Naive thymus-derived CD4-positive, alpha-beta T cell (primary cell): ENCODE measurements at regions of chr1 and their contacts with region 1.

Region 1: GRCh38 chr1:86380257-86380861 is 15.8 kb downstream of the ODF2L start:
- DNase-seq: peak in 7 of 9 donors; percentile 15 to 64 (median 46)
- ATAC-seq: peak; percentile 90
- H3K4me3 ChIP-seq: no peak overlapping the region
- H3K4me3 Mint-ChIP-seq: peak overlapping the region in 2 of 10 donors; percentile 15 to 45
- H3K27ac ChIP-seq: no peak overlapping the region
- H3K27ac Mint-ChIP-seq: peak overlapping the region in 1 of 9 donors; percentile 59
- H3K4me1 ChIP-seq: peaks cover 0 to 8% of the 10 kb centered on the region in 2 donors
- H3K4me1 Mint-ChIP-seq: peaks cover 1 to 21% (median 16%) of the 10 kb centered on the region in 7 donors
- H3K27me3 ChIP-seq: no peaks in the 10 kb centered on the region
- H3K27me3 Mint-ChIP-seq: no peaks in the 10 kb centered on the region

Region 2: GRCh38 chr1:86395771-86396497 is 15.6 kb after region 1 on chr1 and contains the start of gene ODF2L:
- CTCF ChIA-PET with region 1: interaction called, 4 read pairs
- POLR2A ChIA-PET with region 1: interaction called, 21 read pairs
- intact Hi-C with region 1: loop called (anchors 1 kb)
- DNase-seq: peak; percentile 73 to 92 (median 90)
- ATAC-seq: peak; percentile 100
- H3K4me3 ChIP-seq: peak within 1 kb of the TSS; percentile 80
- H3K4me3 Mint-ChIP-seq: peak within 1 kb of the TSS; percentile 90 to 100 (median 98)
- H3K27ac ChIP-seq: peak within 1 kb of the TSS; percentile 90
- H3K27ac Mint-ChIP-seq: peak within 1 kb of the TSS; percentile 94 to 99 (median 98)
- H3K4me1 ChIP-seq: peaks cover 17 to 20% of the 10 kb centered on the region in 2 donors
- H3K4me1 Mint-ChIP-seq: peaks cover 23 to 70% (median 58%) of the 10 kb centered on the region in 7 donors
- H3K27me3 ChIP-seq: no peaks in the 10 kb centered on the region
- H3K27me3 Mint-ChIP-seq: peaks cover 0 to 7% (median 0%) of the 10 kb centered on the region in 5 donors
- total RNA-seq, gene ODF2L: 50.3 to 75.3 (median 52.2) TPM

Region 3: DNA sequence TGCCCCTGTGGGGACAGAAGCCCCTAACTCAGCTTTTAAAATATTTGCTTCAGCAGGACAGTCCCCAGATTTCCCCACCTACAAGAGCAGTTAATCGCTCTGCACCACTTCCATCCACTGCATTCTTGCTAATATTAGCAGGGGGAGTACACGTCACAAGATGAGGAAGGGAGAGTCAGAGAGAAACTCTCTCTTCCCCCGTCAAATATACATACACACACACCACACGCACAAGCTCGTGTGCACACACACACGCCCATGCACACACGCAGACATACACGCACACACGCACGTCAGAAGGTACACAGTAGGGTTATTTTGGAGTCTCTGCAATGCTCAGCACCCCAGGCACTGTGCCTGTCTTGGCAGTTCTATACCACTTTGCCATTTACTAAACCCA is 90.5 kb after region 1 on chr1:
- CTCF ChIA-PET with region 1: interaction called, 14 read pairs
- POLR2A ChIA-PET with region 1: no interaction called
- intact Hi-C with region 1: loop called (anchors 1 kb)
- DNase-seq: no peak
- ATAC-seq: no peak
- H3K4me3 ChIP-seq: no peak overlapping the region
- H3K4me3 Mint-ChIP-seq: no peak overlapping the region
- H3K27ac ChIP-seq: no peak overlapping the region
- H3K27ac Mint-ChIP-seq: no peak overlapping the region
- H3K4me1 ChIP-seq: no peaks in the 10 kb centered on the region
- H3K4me1 Mint-ChIP-seq: peaks cover 0 to 3% (median 0%) of the 10 kb centered on the region in 7 donors
- H3K27me3 ChIP-seq: peaks cover 0 to 3% of the 10 kb centered on the region in 2 donors
- H3K27me3 Mint-ChIP-seq: peaks cover 7 to 35% (median 11%) of the 10 kb centered on the region in 5 donors

Region 4: GRCh38 chr1:86507935-86508582 is 127.7 kb after region 1 on chr1:
- CTCF ChIA-PET with region 1: interaction called, 20 read pairs
- POLR2A ChIA-PET with region 1: interaction called, 3 read pairs
- intact Hi-C with region 1: loop called in 1 of 2 experiments (anchors 1 kb)
- DNase-seq: peak in 5 of 9 donors; percentile 13 to 30 (median 25)
- ATAC-seq: peak; percentile 41
- H3K4me3 ChIP-seq: no peak overlapping the region
- H3K4me3 Mint-ChIP-seq: no peak overlapping the region
- H3K27ac ChIP-seq: no peak overlapping the region
- H3K27ac Mint-ChIP-seq: no peak overlapping the region
- H3K4me1 ChIP-seq: no peaks in the 10 kb centered on the region
- H3K4me1 Mint-ChIP-seq: peaks cover 0 to 8% (median 0%) of the 10 kb centered on the region in 7 donors
- H3K27me3 ChIP-seq: no peaks in the 10 kb centered on the region
- H3K27me3 Mint-ChIP-seq: peaks cover 0 to 29% (median 6%) of the 10 kb centered on the region in 5 donors

Region 5: GRCh38 chr1:86648255-86648654 is 267.9 kb after region 1 on chr1:
- CTCF ChIA-PET with region 1: no interaction called
- POLR2A ChIA-PET with region 1: no interaction called
- intact Hi-C with region 1: no loop called
- DNase-seq: no peak
- ATAC-seq: no peak
- H3K4me3 ChIP-seq: no peak overlapping the region
- H3K4me3 Mint-ChIP-seq: no peak overlapping the region
- H3K27ac ChIP-seq: no peak overlapping the region
- H3K27ac Mint-ChIP-seq: no peak overlapping the region
- H3K4me1 ChIP-seq: no peaks in the 10 kb centered on the region
- H3K4me1 Mint-ChIP-seq: no peaks in the 10 kb centered on the region
- H3K27me3 ChIP-seq: no peaks in the 10 kb centered on the region
- H3K27me3 Mint-ChIP-seq: no peaks in the 10 kb centered on the region

Region 6: GRCh38 chr1:86753700-86754099 is 373.3 kb after region 1 on chr1:
- CTCF ChIA-PET with region 1: no interaction called
- POLR2A ChIA-PET with region 1: no interaction called
- intact Hi-C with region 1: loop called in 1 of 2 experiments (anchors 1 kb)
- DNase-seq: peak in 1 of 9 donors; percentile 9
- ATAC-seq: no peak
- H3K4me3 ChIP-seq: no peak overlapping the region
- H3K4me3 Mint-ChIP-seq: no peak overlapping the region
- H3K27ac ChIP-seq: no peak overlapping the region
- H3K27ac Mint-ChIP-seq: no peak overlapping the region
- H3K4me1 ChIP-seq: no peaks in the 10 kb centered on the region
- H3K4me1 Mint-ChIP-seq: peaks cover 0 to 2% (median 0%) of the 10 kb centered on the region in 7 donors
- H3K27me3 ChIP-seq: no peaks in the 10 kb centered on the region
- H3K27me3 Mint-ChIP-seq: peaks cover 5 to 23% (median 18%) of the 10 kb centered on the region in 5 donors

Region 7: GRCh38 chr1:86965012-86965826 is 584.9 kb after region 1 on chr1:
- CTCF ChIA-PET with region 1: no interaction called
- POLR2A ChIA-PET with region 1: no interaction called
- intact Hi-C with region 1: loop called in 1 of 2 experiments (anchors 2 kb)
- DNase-seq: peak in 6 of 9 donors; percentile 1 to 31 (median 15)
- ATAC-seq: peak; percentile 48
- H3K4me3 ChIP-seq: no peak overlapping the region
- H3K4me3 Mint-ChIP-seq: peak overlapping the region in 1 of 10 donors; percentile 36
- H3K27ac ChIP-seq: no peak overlapping the region
- H3K27ac Mint-ChIP-seq: peak overlapping the region in 3 of 9 donors; percentile 56 to 69 (median 59)
- H3K4me1 ChIP-seq: no peaks in the 10 kb centered on the region
- H3K4me1 Mint-ChIP-seq: peaks cover 0 to 5% (median 0%) of the 10 kb centered on the region in 7 donors
- H3K27me3 ChIP-seq: no peaks in the 10 kb centered on the region
- H3K27me3 Mint-ChIP-seq: no peaks in the 10 kb centered on the region

Region 8: GRCh38 chr1:87953732-87954344 is 1573.5 kb after region 1 on chr1:
- CTCF ChIA-PET with region 1: no interaction called
- POLR2A ChIA-PET with region 1: no interaction called
- intact Hi-C with region 1: loop called in 1 of 2 experiments (anchors 5 kb)
- DNase-seq: peak; percentile 7 to 54 (median 36)
- ATAC-seq: peak; percentile 70
- H3K4me3 ChIP-seq: no peak overlapping the region
- H3K4me3 Mint-ChIP-seq: no peak overlapping the region
- H3K27ac ChIP-seq: no peak overlapping the region
- H3K27ac Mint-ChIP-seq: no peak overlapping the region
- H3K4me1 ChIP-seq: no peaks in the 10 kb centered on the region
- H3K4me1 Mint-ChIP-seq: no peaks in the 10 kb centered on the region
- H3K27me3 ChIP-seq: no peaks in the 10 kb centered on the region
- H3K27me3 Mint-ChIP-seq: peaks cover 4 to 25% (median 8%) of the 10 kb centered on the region in 5 donors